Heart right ventricle (tissue), 16 donors: ENCODE measurements at regions of chr10 and their contacts with region 1.

Region 1: DNA sequence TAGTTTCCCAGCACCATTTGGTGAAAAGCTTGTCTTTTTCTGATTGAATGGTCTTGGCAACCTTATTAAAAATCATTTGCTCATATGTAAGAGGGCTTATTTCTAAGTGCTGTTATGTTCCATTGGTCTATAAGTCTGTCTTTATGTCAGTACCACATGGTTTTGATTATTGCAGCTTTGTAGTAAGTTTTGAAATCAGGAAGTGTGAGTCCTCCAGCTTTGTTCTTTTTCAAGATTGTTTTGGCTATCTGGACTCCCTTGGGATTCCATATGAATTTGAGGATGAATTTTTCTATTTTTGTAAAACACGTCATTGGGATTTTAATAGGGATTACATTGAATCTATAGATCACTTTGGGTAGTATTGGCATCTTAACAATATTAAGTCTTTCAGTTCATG is 5.4 kb downstream of the KIF11 start:
- DNase-seq: no peak
- ATAC-seq: no peak
- H3K4me3 ChIP-seq: no peak overlapping the region
- H3K27ac ChIP-seq: no peak overlapping the region
- H3K4me1 ChIP-seq: peaks cover 0 to 31% (median 4%) of the 10 kb centered on the region in 9 donors
- H3K27me3 ChIP-seq: no peaks in the 10 kb centered on the region
- CTCF ChIP-seq: no peak

Region 2: GRCh38 chr10:92681306-92681834 is 83.0 kb after region 1 on chr10:
- intact Hi-C with region 1: loop called in 1 of 10 experiments (anchors 5 kb)
- DNase-seq: no peak
- ATAC-seq: no peak
- H3K4me3 ChIP-seq: no peak overlapping the region
- H3K27ac ChIP-seq: no peak overlapping the region
- H3K4me1 ChIP-seq: peaks cover 0 to 3% (median 0%) of the 10 kb centered on the region in 9 donors
- H3K27me3 ChIP-seq: peaks cover 0 to 4% (median 0%) of the 10 kb centered on the region in 7 donors
- CTCF ChIP-seq: no peak

Region 3: DNA sequence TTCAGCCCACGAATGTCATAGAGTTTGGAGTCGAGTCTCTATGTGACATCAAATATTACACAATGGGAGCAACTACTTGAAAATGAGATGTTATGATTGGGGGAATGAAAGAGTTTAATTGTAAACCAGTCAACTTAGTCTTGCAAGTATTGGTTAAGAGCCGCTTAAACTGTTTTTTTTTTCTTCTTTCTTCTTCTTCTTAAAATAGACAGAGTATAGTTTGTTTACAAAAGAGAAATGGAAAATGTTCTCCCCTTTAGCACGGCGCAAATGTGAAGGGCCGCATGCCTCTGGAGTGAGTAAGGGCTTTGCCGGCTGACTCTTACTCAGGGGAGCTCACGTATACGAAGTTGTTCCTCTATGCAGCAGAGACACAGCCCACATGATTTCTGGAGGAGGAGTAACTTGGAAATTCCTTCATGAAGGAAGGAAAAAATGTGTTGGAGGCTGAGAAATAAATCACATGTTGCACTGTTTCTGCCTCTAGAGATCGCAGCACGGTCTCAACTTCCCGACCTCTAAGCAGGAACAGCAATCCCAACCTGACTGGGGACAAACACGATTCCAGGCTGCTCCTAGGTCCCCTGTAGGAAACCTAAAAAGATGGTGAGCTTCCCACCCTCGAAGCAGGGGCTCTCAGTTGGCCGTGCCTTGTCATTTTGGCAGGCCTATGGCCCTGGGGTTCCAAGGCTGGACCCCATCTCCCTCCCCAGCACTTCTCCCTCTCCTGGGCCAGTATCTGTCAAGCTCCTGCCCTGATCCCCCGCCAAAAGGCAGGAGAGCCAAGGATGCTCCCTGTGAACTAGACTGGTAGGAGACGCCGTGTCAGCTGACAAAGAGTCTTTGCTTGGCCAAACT is 839.0 kb after region 1 on chr10:
- intact Hi-C with region 1: no loop called
- DNase-seq: peak; percentile 61 to 89
- ATAC-seq: peak; percentile 93 to 96 (median 96)
- H3K4me3 ChIP-seq: peak overlapping the region in 6 of 10 donors; percentile 8 to 27 (median 21)
- H3K27ac ChIP-seq: peak overlapping the region; percentile 88 to 99 (median 97)
- H3K4me1 ChIP-seq: peaks cover 18 to 82% (median 56%) of the 10 kb centered on the region in 9 donors
- H3K27me3 ChIP-seq: no peaks in the 10 kb centered on the region
- CTCF ChIP-seq: no peak